ENCODE measurements at regions of chr2 and their contacts with region 1.

Region 1: DNA sequence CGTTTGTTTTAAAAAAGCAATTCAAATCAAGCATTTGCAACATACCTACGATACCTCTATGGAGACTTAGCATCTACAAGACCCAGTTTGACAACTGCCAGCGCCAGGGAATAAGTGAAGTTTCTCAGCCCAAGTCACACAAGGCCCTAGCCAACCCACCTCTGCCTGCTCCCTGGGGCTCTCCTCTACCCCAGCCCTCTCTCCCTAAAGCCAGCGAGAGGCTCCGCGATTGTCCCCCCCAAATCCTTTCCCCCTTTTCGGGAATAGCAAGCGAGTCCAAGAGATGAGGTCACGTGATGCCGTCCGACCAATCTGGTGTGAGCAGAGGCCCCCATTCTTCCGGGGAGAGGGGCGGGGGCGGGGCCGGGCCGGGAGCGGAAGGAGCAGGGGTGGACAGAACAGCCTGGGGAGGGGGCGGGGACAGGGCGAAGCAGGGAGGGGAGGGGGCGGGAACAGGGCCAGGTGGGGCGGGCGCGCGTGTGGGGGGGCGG is 102.1 kb upstream of the RAB6C start:
- DNase-seq: peak; percentile 72 to 93 (median 82)
- ATAC-seq: peak; percentile 90
- H3K4me3 ChIP-seq: peak overlapping the region; percentile 81
- H3K4me3 Mint-ChIP-seq: peak overlapping the region; percentile 99
- H3K27ac ChIP-seq: peak overlapping the region in 1 of 2 donors; percentile 50
- H3K27ac Mint-ChIP-seq: peak overlapping the region; percentile 92
- H3K4me1 ChIP-seq: peaks cover 15% of the 10 kb centered on the region
- H3K4me1 Mint-ChIP-seq: peaks cover 11% of the 10 kb centered on the region
- H3K27me3 ChIP-seq: no peaks in the 10 kb centered on the region
- H3K27me3 Mint-ChIP-seq: no peaks in the 10 kb centered on the region
- CTCF ChIP-seq: no peak

Region 2: GRCh38 chr2:129859175-129859574 is 18.2 kb before region 1 on chr2:
- CTCF ChIA-PET with region 1: no interaction called
- POLR2A ChIA-PET with region 1: no interaction called
- intact Hi-C with region 1: no loop called
- DNase-seq: no peak
- ATAC-seq: no peak
- H3K4me3 ChIP-seq: no peak overlapping the region
- H3K4me3 Mint-ChIP-seq: no peak overlapping the region
- H3K27ac ChIP-seq: no peak overlapping the region
- H3K27ac Mint-ChIP-seq: no peak overlapping the region
- H3K4me1 ChIP-seq: no peaks in the 10 kb centered on the region
- H3K4me1 Mint-ChIP-seq: no peaks in the 10 kb centered on the region
- H3K27me3 ChIP-seq: no peaks in the 10 kb centered on the region
- H3K27me3 Mint-ChIP-seq: no peaks in the 10 kb centered on the region
- CTCF ChIP-seq: no peak

Region 3: GRCh38 chr2:130332271-130333073 is 455.1 kb after region 1 on chr2:
- CTCF ChIA-PET with region 1: no interaction called
- POLR2A ChIA-PET with region 1: no interaction called
- intact Hi-C with region 1: loop called in 1 of 2 experiments (anchors 5 kb)
- DNase-seq: peak; percentile 45 to 80 (median 62)
- ATAC-seq: peak; percentile 76
- H3K4me3 ChIP-seq: no peak overlapping the region
- H3K4me3 Mint-ChIP-seq: peak overlapping the region; percentile 40
- H3K27ac ChIP-seq: no peak overlapping the region
- H3K27ac Mint-ChIP-seq: no peak overlapping the region
- H3K4me1 ChIP-seq: peaks cover 9% of the 10 kb centered on the region
- H3K4me1 Mint-ChIP-seq: peaks cover 14% of the 10 kb centered on the region
- H3K27me3 ChIP-seq: peaks cover 2 to 7% of the 10 kb centered on the region in 2 experiments
- H3K27me3 Mint-ChIP-seq: peaks cover 36% of the 10 kb centered on the region
- CTCF ChIP-seq: peak; percentile 94

Measured in CD4-positive, alpha-beta T cell (primary cell).